Endothelial cell of umbilical vein (primary cell): ENCODE measurements at regions of chr1 and their contacts with region 1.

Region 1: DNA sequence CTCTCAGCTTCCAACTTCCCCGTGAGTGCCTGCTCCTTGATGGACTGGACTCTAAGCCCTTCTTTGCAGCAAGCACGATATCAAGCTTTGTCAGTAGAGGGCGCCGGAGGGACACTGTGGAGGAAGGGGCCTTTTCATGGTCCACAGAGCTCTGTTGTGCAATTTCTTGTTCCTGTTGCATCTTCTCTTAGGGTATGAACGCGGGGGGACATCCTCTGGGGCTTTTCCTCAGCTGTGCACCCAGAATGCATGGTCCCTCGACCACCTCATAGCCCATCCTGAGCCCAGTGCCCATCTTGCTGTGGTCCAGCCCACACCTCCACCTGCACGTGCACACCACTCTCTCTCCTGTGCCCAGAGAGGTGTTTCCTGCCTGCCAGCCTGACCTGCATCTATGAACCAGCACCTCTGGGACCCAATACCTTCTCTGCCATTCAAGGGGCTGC is 556.8 kb downstream of the PTPRU start:
- DNase-seq: peak; percentile 72
- H3K4me3 ChIP-seq: no peak overlapping the region
- H3K27ac ChIP-seq: no peak overlapping the region
- H3K4me1 ChIP-seq: no peaks in the 10 kb centered on the region
- H3K27me3 ChIP-seq: no peaks in the 10 kb centered on the region
- CTCF ChIP-seq: peak; percentile 75 to 87
- POLR2A ChIP-seq: no peak

Region 2: GRCh38 chr1:29532751-29533150 is 260.4 kb before region 1 on chr1:
- CTCF ChIA-PET with region 1: no interaction called
- POLR2A ChIA-PET with region 1: no interaction called
- dilution Hi-C with region 1: no loop called
- intact Hi-C with region 1: no loop called
- DNase-seq: no peak
- H3K4me3 ChIP-seq: no peak overlapping the region
- H3K27ac ChIP-seq: no peak overlapping the region
- H3K4me1 ChIP-seq: no peaks in the 10 kb centered on the region
- H3K27me3 ChIP-seq: no peaks in the 10 kb centered on the region
- CTCF ChIP-seq: no peak
- POLR2A ChIP-seq: no peak

Region 3: DNA sequence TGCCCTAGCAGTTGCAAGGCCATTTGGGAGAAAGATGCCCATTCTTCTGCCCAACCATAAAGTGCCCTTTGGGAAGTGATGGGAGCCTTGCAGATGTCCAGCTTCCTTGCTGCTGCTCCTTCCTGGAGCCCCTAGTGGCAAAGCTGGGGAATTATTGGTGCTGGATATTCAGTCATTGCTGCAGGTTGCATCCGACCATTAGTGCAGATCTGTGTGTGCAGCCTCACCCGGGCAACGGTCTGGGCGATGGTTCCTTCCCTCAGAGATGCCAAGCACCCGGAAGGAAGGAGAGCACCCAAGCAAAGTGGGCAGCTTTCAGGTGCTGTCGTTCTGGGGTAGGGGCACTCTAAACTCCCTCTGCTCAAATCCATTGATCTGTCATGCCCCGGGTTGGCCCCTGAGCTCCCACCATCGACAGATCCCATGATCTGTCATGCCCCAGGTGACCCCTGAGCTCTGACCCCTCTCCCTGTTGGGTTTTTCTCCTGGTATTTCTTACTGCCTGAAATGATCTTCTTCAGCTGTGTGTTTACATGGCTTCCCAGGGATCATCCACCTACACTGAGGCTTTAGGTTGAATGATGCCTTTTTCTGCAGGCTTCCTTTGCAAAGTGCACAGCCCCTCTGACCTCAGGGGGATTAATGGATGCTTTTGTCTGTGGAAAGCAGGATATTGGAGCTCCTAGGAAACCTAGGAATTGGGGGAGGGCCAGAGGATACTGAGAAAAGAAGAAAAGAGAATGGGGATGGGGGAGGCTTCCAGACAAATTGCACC is 89.3 kb before region 1 on chr1:
- CTCF ChIA-PET with region 1: interaction called, 20 read pairs
- POLR2A ChIA-PET with region 1: no interaction called
- dilution Hi-C with region 1: no loop called
- intact Hi-C with region 1: loop called (anchors 1 kb)
- DNase-seq: peak; percentile 39
- H3K4me3 ChIP-seq: no peak overlapping the region
- H3K27ac ChIP-seq: no peak overlapping the region
- H3K4me1 ChIP-seq: peaks cover 11% of the 10 kb centered on the region
- H3K27me3 ChIP-seq: peaks cover 10 to 16% of the 10 kb centered on the region in 2 experiments
- CTCF ChIP-seq: peak; percentile 68 to 75
- POLR2A ChIP-seq: no peak

Region 4: DNA sequence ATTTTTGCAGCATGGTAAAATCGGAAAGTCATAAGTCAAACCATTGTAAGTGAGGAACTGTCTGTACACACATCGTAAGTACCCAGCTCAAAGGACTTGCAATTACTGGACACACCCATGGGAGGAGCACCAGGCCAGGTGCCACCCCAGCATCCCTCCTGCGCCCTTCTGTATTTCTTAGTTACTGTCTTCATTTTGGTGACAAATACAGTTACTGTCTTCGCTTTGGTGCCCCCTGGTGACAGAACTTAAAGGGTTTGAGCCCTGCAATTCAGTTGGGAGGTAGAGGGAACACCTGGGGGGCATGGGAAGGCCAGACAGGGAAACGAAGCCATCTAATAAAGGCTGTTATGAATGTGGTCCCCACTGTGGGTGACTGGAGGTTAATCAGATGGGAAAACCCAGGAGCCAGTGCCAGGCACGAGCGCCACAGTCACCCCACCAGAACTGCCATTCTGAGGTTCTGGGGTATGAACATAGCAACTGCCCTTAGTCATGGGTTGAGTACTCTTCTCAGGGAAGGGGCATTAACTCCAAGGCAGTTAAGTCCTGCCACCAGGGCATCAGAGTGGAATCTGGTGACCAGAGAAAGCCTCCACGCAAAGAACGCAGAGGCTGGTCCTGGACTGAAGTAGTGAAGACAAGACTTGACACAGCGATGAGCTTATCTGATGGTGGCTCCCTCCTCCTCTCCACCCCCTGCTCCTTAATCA is 56.1 kb after region 1 on chr1:
- CTCF ChIA-PET with region 1: no interaction called
- POLR2A ChIA-PET with region 1: no interaction called
- dilution Hi-C with region 1: no loop called
- intact Hi-C with region 1: loop called (anchors 1 kb)
- DNase-seq: peak; percentile 21
- H3K4me3 ChIP-seq: no peak overlapping the region
- H3K27ac ChIP-seq: no peak overlapping the region
- H3K4me1 ChIP-seq: no peaks in the 10 kb centered on the region
- H3K27me3 ChIP-seq: no peaks in the 10 kb centered on the region
- CTCF ChIP-seq: peak; percentile 23 to 34
- POLR2A ChIP-seq: no peak

Region 5: DNA sequence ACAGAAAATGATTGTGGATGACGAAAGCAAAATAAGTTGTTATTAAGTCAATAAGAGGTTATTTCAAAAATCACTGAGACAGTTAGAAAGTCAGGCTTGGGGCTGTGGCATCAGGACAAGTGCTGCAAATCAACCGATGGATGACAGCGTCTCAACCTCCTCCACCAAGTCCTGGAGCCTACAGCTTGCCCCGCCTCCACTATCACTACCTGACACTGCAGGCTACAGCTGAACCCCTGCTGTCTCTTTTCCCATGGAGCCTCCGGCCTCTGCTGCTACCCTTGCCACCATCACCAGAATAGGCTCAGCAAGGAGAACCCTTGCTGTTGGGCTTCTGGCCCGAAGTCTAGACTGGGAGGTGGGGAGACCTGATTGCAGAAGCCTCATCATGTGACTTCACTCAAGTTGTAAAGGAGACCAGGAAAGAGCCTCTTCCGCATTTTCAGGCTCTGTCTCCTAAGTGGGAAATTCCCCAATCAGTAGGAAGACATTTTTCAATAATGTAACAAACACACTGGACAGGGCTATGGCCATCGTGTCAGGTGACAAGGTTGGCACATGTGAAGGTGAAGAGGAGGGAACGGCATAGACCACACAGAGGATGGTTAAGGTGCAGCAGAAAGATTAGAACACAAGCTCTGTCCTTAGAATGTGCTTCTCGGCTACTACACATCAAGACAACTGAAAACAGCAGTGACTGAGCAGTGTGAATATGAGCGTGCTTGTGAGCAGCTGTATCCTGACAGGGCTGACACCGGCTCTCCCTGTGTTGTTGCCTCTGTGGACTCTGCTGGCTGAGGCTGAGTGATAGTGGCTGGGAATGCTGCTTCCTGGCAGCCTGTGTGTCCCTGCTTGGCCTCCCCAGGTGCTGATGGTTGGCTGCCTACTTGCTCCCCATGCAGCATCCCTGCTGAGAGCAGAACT is 103.9 kb after region 1 on chr1:
- CTCF ChIA-PET with region 1: no interaction called
- POLR2A ChIA-PET with region 1: no interaction called
- dilution Hi-C with region 1: no loop called
- intact Hi-C with region 1: no loop called
- DNase-seq: no peak
- H3K4me3 ChIP-seq: no peak overlapping the region
- H3K27ac ChIP-seq: no peak overlapping the region
- H3K4me1 ChIP-seq: no peaks in the 10 kb centered on the region
- H3K27me3 ChIP-seq: no peaks in the 10 kb centered on the region
- CTCF ChIP-seq: no peak
- POLR2A ChIP-seq: no peak

Region 6: DNA sequence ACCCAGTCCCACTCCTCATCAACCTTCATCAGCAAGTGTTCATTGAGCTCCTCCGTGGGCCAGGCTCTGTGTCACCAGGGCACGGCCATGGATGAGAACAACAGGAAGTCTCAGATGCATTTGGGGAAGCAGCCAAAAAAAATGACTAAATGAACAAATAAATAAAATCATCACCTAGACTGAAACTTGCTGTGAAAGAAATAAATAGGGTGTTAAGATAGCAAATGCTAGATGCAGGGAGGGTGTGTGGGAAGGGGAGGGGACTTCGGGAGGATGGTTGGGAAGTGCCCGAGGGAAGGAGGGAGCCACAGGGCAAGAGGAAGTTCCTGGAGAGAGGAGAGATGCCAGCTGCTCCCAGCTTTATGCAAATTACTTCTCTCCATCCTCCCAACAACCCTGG is 139.9 kb after region 1 on chr1:
- CTCF ChIA-PET with region 1: no interaction called
- POLR2A ChIA-PET with region 1: no interaction called
- dilution Hi-C with region 1: no loop called
- intact Hi-C with region 1: no loop called
- DNase-seq: no peak
- H3K4me3 ChIP-seq: no peak overlapping the region
- H3K27ac ChIP-seq: no peak overlapping the region
- H3K4me1 ChIP-seq: no peaks in the 10 kb centered on the region
- H3K27me3 ChIP-seq: no peaks in the 10 kb centered on the region
- CTCF ChIP-seq: no peak
- POLR2A ChIP-seq: no peak

Region 7: DNA sequence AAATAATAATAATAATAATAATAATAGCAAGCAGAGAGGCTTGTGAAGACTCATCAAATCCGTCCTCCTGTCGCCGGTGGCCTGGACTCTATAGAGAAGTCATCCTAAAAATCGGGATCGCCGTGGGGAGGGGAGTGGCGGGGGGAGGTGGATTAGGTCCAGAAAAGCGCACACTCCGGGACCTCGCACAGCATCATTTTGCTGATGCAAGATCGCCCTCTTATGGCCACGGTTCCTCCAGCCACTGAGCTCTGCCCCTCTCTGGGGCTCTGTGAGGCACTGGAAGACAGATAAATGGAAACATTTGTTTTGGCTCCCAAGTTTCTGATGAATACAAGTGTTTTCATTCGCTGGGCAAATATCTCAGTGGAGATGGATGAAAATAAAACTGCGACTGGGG is 318.3 kb after region 1 on chr1:
- CTCF ChIA-PET with region 1: interaction called, 38 read pairs
- POLR2A ChIA-PET with region 1: no interaction called
- dilution Hi-C with region 1: no loop called
- intact Hi-C with region 1: loop called (anchors 1 kb)
- DNase-seq: peak; percentile 18
- H3K4me3 ChIP-seq: no peak overlapping the region
- H3K27ac ChIP-seq: no peak overlapping the region
- H3K4me1 ChIP-seq: no peaks in the 10 kb centered on the region
- H3K27me3 ChIP-seq: peaks cover 0 to 1% of the 10 kb centered on the region in 2 experiments
- CTCF ChIP-seq: peak; percentile 53 to 56
- POLR2A ChIP-seq: no peak

Region 8: DNA sequence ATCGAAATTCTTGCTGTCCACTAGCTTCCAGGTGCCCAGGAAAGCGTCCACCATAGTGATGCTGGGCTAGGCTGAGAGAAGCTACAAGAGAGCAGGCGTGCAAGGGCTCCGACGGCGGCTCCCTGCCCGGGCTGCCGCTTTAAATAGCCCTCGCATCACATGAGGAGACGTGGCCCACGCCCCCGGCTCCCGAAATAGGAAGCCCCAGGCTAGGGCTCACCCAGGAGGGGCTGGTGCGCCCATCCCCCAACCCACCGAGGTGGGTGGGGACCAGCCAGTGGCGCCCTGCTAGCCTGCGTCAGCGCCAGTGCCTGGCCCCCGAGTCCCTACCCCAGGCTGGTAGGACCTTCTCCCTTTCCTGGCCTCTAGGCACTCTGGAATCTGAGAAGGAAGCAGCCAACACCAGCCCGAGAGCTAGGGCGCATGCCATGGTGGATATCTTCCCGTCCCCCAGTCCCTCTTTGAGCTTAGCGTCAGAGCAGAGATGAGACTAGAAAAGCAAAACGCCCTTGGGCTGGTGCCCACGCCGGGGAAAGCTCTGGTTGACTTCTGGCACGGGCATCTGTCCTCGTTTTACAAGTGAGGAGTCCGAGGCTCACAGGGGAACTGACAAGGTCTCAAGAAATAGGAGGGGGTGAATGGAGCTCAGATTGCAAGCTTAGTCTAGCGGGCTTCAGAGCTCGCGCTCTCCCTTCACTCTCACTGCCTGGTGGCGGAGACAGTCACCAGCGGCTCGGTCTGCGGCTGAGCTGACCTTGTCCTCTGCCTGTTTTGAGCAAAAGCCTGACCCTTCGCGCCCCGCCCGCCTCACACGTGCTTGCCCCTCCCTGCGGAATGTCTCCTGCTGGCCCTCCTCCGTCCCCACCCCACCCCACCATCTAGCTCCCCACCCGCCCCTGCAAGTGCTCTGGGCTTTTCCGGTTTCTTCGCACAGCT is 1580.1 kb after region 1 on chr1 and contains the start of gene FABP3:
- CTCF ChIA-PET with region 1: no interaction called
- POLR2A ChIA-PET with region 1: no interaction called
- dilution Hi-C with region 1: no loop called
- intact Hi-C with region 1: no loop called
- DNase-seq: peak; percentile 52
- H3K4me3 ChIP-seq: peak within 1 kb of the TSS; percentile 17 to 43 (median 35)
- H3K27ac ChIP-seq: no peak within 1 kb of the TSS
- H3K4me1 ChIP-seq: peaks cover 6% of the 10 kb centered on the region
- H3K27me3 ChIP-seq: no peaks in the 10 kb centered on the region
- CTCF ChIP-seq: no peak
- POLR2A ChIP-seq: no peak
- total RNA-seq, gene FABP3: 0.84 and 1.8 TPM in 2 replicates